ENCODE measurements at regions of chr5 and their contacts with region 1.

Region 1: GRCh38 chr5:10307206-10308148 is at the start of gene CMBL:
- DNase-seq: peak; percentile 37 to 76 (median 52)
- ATAC-seq: peak; percentile 75 to 86 (median 80)
- H3K4me3 ChIP-seq: peak within 1 kb of the TSS in 11 of 12 donors; percentile 53 to 81 (median 67)
- H3K27ac ChIP-seq: peak within 1 kb of the TSS; percentile 45 to 90 (median 81)
- H3K4me1 ChIP-seq: peaks cover 0 to 39% (median 12%) of the 10 kb centered on the region in 12 donors
- H3K27me3 ChIP-seq: no peaks in the 10 kb centered on the region
- CTCF ChIP-seq: no peak
- POLR2A ChIP-seq: no peak
- total RNA-seq, gene CMBL: 12.4 to 53.5 (median 29.0) TPM

Region 2: DNA sequence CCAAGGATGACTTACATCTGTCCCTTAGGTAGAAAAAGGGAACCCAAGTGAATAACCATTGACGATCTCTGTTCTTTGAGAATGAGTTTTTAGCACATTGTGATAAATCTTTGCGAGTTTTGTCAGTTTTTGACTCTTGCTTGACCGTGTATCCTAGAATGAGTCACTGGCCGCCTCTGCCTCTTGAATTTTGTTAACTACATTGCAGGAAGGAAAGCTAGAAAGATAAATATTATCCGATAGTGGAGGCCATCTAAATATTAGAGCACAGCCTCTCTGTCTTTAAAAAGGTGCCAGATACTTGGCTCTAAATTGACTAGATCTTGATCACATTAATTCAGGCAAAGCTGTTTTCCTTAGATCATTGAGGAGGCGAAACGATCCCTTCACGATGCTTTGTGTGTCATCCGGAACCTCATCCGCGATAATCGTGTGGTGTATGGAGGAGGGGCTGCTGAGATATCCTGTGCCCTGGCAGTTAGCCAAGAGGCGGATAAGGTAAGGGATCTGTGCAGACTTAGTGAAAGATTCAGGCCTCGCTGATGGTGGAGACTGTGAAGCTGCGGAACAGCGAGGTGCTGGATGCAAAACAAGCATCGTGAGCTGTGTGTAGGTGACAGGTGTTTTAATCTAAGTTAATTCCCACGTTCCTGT is 45.2 kb before region 1 on chr5:
- intact Hi-C with region 1: no loop called
- DNase-seq: no peak
- ATAC-seq: peak in 1 of 4 donors; percentile 36
- H3K4me3 ChIP-seq: no peak overlapping the region
- H3K27ac ChIP-seq: no peak overlapping the region
- H3K4me1 ChIP-seq: peaks cover 0 to 6% (median 0%) of the 10 kb centered on the region in 12 donors
- H3K27me3 ChIP-seq: no peaks in the 10 kb centered on the region
- CTCF ChIP-seq: no peak
- POLR2A ChIP-seq: no peak

Region 3: DNA sequence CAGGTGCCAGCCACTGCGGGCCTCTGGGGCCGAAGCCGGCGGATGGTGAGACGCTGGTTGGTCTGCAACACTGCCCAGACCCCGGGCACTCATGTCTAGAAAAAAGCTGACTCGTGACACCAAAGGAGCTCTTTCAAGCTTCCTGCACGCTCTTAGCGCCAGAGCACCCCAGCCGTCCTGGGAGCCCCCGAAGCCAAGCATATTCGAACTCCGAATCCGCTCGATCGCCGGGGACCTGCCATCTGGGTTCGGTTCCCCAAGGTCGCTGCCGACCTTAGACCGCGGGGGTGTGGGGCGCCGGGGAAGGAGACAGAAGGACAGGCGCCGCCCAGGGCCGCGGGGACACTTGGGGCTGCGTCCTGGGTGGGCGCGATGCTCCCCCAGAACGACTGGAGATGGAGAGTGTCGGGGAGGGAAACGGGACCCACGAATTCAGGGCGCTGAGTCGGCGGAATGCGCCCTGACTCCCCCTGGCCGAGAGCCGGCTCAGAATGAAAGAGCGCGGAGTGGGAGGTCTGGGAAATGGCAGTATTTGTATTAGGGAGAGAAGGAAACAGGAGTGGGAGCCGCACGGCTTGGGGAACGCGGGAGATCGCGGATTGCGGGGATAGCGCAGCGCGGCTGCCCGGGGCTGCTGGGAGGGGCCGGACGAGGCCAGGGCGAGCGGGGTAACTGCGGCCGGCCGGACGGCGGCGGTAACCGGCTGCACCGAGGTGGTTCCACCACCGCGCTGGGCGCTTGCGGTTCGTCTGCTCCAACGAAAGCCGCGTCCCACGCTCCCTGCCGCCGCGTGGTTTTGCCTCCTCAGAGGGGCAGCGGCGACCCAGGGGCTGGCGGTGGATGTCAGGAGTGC is 25.9 kb after region 1 on chr5:
- intact Hi-C with region 1: loop called in 1 of 10 experiments (anchors 2 kb)
- DNase-seq: peak; percentile 37 to 78 (median 57)
- ATAC-seq: peak; percentile 40 to 69 (median 63)
- H3K4me3 ChIP-seq: peak overlapping the region; percentile 25 to 76 (median 62)
- H3K27ac ChIP-seq: peak overlapping the region; percentile 58 to 88 (median 81)
- H3K4me1 ChIP-seq: peaks cover 0 to 52% (median 35%) of the 10 kb centered on the region in 12 donors
- H3K27me3 ChIP-seq: peaks cover 0 to 19% (median 0%) of the 10 kb centered on the region in 9 donors
- CTCF ChIP-seq: peak in 5 of 12 donors; percentile 10 to 32 (median 29)
- POLR2A ChIP-seq: no peak

Measured in heart left ventricle (tissue), 16 donors.